ENCODE measurements at regions of chr17 and their contacts with region 1.

Region 1: DNA sequence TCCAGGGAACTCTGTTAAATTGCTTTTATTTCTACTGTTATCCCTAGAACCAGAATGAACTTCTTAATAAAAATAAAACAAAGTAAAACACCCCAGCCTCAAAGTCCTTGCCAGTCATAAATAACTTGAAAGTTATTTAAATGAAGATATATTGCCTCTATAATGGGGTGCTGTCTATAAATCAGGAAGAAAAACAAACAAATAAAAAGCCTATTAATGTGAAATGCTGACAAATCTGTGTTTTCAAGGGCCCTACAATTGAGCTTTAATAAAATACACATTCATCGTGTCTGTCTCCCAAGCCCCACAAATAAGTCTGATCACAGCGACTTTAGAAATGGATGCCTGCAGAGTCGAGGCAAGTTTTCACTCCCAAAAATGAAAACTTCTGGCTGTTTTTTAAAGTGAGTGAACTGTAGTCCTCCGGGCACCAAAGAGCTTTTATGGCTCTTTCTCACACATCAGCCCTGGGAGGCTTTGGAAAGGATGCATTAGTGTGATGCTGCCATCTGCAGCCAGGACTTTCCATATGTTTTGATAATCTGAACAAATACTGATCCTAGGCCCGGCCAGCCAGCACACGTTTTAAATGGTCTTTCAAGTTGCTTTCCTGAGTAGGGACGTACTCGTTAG is 16.4 kb downstream of the NACA2 start:
- DNase-seq: peak; percentile 89
- ATAC-seq: peak; percentile 97
- H3K4me3 ChIP-seq: peak overlapping the region; percentile 23; the same call in 1 of the 2 replicates
- H3K27ac ChIP-seq: peak overlapping the region; percentile 59
- H3K4me1 ChIP-seq: peaks cover 26% of the 10 kb centered on the region
- H3K27me3 ChIP-seq: no peaks in the 10 kb centered on the region
- CTCF ChIP-seq: peak; percentile 80

Region 2: GRCh38 chr17:59804901-59805465 is 1769.7 kb before region 1 on chr17:
- CTCF ChIA-PET with region 1: no interaction called
- POLR2A ChIA-PET with region 1: no interaction called
- intact Hi-C with region 1: no loop called
- DNase-seq: no peak
- ATAC-seq: no peak
- H3K4me3 ChIP-seq: no peak overlapping the region
- H3K27ac ChIP-seq: no peak overlapping the region
- H3K4me1 ChIP-seq: peaks cover 8% of the 10 kb centered on the region
- H3K27me3 ChIP-seq: no peaks in the 10 kb centered on the region
- CTCF ChIP-seq: no peak

Region 3: DNA sequence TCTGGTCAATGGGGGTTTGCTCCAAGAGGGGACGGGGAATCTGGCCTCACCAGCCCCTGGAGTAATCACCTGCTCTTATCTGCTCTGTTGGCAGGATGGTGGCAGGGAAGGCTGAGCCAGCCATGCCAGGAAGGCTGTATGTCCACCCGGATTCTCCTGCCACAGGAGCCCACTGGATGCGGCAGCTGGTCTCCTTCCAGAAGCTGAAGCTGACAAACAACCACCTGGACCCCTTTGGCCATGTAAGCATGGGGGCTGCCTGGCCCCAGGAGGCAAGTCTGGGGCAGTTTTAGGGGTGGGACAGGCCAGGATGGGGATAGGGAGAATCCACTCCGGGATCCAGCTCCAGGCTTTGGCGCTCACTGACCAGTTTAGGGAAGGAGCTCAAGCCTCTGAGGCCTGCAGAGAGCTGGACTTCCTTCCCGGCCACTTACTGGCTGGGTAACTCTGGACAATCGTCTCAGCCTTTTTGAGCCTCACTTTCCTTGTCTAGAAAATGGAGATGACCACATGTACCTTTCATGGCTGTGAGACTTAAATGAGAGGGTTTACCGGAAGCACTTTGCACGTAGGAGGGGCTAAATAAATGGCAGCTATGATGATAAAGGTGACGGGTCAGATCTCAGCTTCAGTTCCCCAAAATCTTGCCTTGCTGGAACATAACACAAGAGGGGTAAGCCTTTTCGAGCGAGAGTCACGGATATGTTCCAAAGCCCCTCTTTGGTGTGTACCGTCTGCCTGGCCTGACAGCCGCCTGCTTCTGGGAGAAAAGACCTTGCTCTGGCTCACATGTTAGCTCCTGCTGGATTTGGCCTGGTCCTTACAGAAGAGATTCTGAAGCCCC is 107.0 kb before region 1 on chr17:
- CTCF ChIA-PET with region 1: interaction called, 10 read pairs
- POLR2A ChIA-PET with region 1: no interaction called
- intact Hi-C with region 1: no loop called
- DNase-seq: peak; percentile 59
- ATAC-seq: peak; percentile 62
- H3K4me3 ChIP-seq: no peak overlapping the region
- H3K27ac ChIP-seq: no peak overlapping the region
- H3K4me1 ChIP-seq: no peaks in the 10 kb centered on the region
- H3K27me3 ChIP-seq: no peaks in the 10 kb centered on the region
- CTCF ChIP-seq: no peak

Region 4: GRCh38 chr17:61504697-61505349 is 69.8 kb before region 1 on chr17:
- CTCF ChIA-PET with region 1: no interaction called
- POLR2A ChIA-PET with region 1: no interaction called
- intact Hi-C with region 1: no loop called
- DNase-seq: peak; percentile 68
- ATAC-seq: peak; percentile 72
- H3K4me3 ChIP-seq: no peak overlapping the region
- H3K27ac ChIP-seq: no peak overlapping the region
- H3K4me1 ChIP-seq: peaks cover 8% of the 10 kb centered on the region
- H3K27me3 ChIP-seq: no peaks in the 10 kb centered on the region
- CTCF ChIP-seq: no peak

Region 5: GRCh38 chr17:61551255-61551742 is 23.4 kb before region 1 on chr17:
- CTCF ChIA-PET with region 1: interaction called, 3 read pairs
- POLR2A ChIA-PET with region 1: interaction called, 7 read pairs
- intact Hi-C with region 1: loop called (anchors 1 kb)
- DNase-seq: peak; percentile 84
- ATAC-seq: peak; percentile 94
- H3K4me3 ChIP-seq: no peak overlapping the region
- H3K27ac ChIP-seq: no peak overlapping the region
- H3K4me1 ChIP-seq: peaks cover 1% of the 10 kb centered on the region
- H3K27me3 ChIP-seq: no peaks in the 10 kb centered on the region
- CTCF ChIP-seq: peak; percentile 94

Region 6: DNA sequence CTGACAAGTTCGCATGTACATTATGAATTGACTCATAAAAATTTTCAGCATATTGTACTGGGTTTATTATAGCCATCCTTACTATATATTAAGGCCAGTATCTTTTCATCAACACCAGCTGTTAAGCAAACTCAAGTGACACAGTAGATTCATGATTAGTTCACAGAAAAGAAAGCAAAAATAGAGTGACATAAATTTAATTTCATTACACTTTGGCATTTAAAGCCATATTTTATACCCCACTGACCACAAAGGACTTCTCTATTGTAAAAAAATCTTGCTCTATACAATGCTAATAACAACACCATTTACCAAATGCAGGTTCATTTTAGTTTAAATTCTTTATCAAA is 37.0 kb after region 1 on chr17:
- CTCF ChIA-PET with region 1: no interaction called
- POLR2A ChIA-PET with region 1: no interaction called
- intact Hi-C with region 1: no loop called
- DNase-seq: no peak
- ATAC-seq: no peak
- H3K4me3 ChIP-seq: no peak overlapping the region
- H3K27ac ChIP-seq: no peak overlapping the region
- H3K4me1 ChIP-seq: peaks cover 12% of the 10 kb centered on the region
- H3K27me3 ChIP-seq: no peaks in the 10 kb centered on the region
- CTCF ChIP-seq: no peak

Measured in PC-3 (cell line).